ENCODE measurements at regions of chr10 and their contacts with region 1.

Region 1: DNA sequence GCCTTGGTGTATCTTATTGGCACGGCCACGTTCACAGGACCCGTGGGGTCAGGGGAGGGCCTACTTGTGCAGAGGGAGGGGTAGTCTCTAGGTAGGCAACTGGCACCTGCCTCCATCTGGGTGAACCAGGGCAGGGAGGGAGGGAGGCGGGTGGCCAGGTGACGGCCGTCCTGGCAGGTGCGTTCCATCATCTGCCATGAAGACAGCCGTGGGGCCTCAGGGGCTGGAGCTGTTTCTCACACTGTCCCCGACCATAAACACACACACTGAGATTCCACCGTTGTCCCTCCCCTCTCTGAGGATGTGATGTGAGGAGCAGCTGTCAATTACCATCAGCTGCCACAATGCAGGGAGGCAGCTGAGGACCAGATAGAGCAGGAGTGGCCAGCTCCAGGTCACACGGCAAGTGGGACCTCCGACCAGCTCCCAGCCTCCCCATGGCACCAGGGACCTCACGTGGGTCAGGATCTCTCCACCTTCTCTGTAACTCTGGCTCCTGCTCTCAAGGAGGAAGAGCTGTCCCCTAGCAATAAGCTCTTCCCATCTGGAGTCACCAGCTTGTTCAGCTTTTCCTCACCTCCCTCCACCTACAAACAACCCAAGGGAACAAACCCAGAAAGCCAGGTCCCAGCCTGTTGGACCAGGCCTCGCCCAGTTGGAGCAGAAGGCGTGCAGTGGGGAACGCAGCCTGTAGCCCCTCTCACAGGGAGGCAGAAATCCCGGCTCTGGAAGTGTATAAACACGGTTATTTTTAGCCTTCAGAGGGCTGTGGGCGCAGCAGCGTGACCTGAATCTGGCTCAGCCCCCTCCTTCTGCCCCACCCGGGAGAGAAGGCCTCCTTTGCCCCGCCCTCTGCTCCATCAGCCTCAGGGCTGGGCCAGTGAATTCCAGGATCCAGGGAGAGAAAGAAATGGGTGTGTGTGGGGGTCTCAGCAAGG is 33.1 kb downstream of the ZMIZ1 start:
- DNase-seq: no peak
- H3K4me3 ChIP-seq: no peak overlapping the region
- H3K27ac ChIP-seq: no peak overlapping the region
- H3K4me1 ChIP-seq: peaks cover 44% of the 10 kb centered on the region
- H3K27me3 ChIP-seq: no peaks in the 10 kb centered on the region
- CTCF ChIP-seq: no peak

Region 2: DNA sequence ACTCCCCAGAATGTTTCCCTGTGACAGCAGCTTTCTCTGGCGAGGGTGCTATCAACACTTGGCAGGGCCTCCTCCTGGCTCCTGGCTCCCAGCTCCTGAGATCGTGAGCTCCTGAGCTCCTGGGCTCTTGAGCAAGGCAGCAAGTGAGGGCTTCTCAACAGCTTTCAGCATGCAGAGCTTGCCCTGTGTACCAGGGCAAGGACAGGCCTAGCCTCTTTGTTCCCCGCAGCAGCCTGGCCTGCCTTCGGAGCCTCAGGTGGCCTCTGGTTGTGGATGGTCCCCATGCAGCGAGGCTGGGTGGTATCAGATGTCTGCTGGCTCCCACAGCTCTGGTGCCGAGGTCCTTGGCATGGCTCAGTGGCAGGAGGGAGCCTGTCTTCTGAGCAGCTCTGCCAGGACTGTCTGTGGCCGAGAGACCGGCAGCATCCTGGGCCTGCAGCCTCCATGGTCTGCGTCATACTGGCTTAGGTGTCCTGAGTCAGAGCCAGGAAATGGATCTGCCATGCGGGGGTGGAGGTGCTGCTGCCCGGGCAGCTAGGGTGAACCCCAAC is 11.1 kb after region 1 on chr10:
- CTCF ChIA-PET with region 1: no interaction called
- dilution Hi-C with region 1: no loop called
- in situ Hi-C with region 1: no loop called
- intact Hi-C with region 1: loop called (anchors 1 kb)
- DNase-seq: peak; percentile 91
- H3K4me3 ChIP-seq: no peak overlapping the region
- H3K27ac ChIP-seq: peak overlapping the region; percentile 75
- H3K4me1 ChIP-seq: peaks cover 51% of the 10 kb centered on the region
- H3K27me3 ChIP-seq: no peaks in the 10 kb centered on the region
- CTCF ChIP-seq: no peak

Region 3: DNA sequence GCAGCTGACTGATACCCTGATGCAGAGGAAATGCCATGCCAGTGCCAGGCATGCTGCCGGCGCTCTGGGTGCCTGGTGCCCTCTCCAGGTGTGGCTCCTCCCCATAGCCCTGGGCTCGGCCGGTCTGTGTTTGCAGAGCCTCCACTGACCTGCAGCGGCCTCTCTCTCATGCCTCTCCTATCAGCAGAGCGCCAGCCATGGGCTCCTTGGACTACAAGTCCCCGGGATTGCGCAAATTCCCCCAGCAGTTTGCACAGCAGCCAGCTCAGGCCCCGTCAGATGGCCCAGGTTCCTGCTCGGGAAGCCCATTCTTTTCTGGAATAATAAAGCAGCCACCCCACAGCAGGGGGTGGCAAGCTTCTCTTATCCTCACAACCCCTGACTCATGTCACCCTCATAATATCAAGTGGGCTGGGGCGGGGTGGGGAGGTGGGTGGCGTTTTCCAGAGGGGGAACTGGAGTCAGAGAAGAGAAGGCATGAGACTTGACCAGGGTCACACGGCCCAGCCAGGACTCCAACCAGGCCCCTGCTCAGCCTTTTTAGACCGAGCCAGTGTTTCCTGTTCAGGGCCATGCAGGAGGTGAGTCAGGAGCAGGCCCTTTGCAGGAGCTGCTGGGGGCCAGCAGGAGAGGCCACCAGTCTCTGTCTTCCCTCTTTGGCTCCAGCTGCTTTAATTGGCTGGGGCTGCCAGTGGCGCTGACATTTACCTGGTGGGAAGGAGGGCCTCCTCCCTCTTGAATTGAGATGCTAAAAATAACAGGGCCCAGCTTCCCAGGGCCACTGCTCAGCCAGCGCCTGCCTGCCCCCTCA is 25.5 kb after region 1 on chr10:
- CTCF ChIA-PET with region 1: no interaction called
- dilution Hi-C with region 1: no loop called
- in situ Hi-C with region 1: no loop called
- intact Hi-C with region 1: no loop called
- DNase-seq: peak; percentile 35
- H3K4me3 ChIP-seq: no peak overlapping the region
- H3K27ac ChIP-seq: no peak overlapping the region
- H3K4me1 ChIP-seq: no peaks in the 10 kb centered on the region
- H3K27me3 ChIP-seq: no peaks in the 10 kb centered on the region
- CTCF ChIP-seq: no peak